Activated CD4-positive, alpha-beta T cell treated with anti-CD3 and anti-CD28 coated beads for 36 hours (primary cell): ENCODE measurements at regions of chr17 and their contacts with region 1.

Region 1: GRCh38 chr17:47789611-47790561 is 31.7 kb downstream of the OSBPL7 start:
- DNase-seq: peak; percentile 80
- ATAC-seq: peak; percentile 97
- H3K4me3 Mint-ChIP-seq: peak overlapping the region; percentile 63
- H3K27ac Mint-ChIP-seq: no peak overlapping the region
- H3K4me1 Mint-ChIP-seq: peaks cover 10% of the 10 kb centered on the region
- H3K27me3 Mint-ChIP-seq: peaks cover 47% of the 10 kb centered on the region

Region 2: GRCh38 chr17:47733047-47733673 is 56.7 kb before region 1 on chr17 and contains the start of gene TBX21:
- CTCF ChIA-PET with region 1: interaction called, 10 read pairs
- POLR2A ChIA-PET with region 1: no interaction called
- intact Hi-C with region 1: no loop called
- DNase-seq: peak; percentile 96
- ATAC-seq: peak; percentile 80
- H3K4me3 Mint-ChIP-seq: peak within 1 kb of the TSS; percentile 93
- H3K27ac Mint-ChIP-seq: peak within 1 kb of the TSS; percentile 98
- H3K4me1 Mint-ChIP-seq: peaks cover 63% of the 10 kb centered on the region
- H3K27me3 Mint-ChIP-seq: no peaks in the 10 kb centered on the region
- total RNA-seq, gene TBX21: 73.4 to 76.8 TPM

Region 3: GRCh38 chr17:47742319-47743181 is 47.3 kb before region 1 on chr17:
- CTCF ChIA-PET with region 1: interaction called, 3 read pairs
- POLR2A ChIA-PET with region 1: no interaction called
- intact Hi-C with region 1: loop called in 1 of 2 experiments (anchors 5 kb)
- DNase-seq: peak; percentile 67
- ATAC-seq: no peak
- H3K4me3 Mint-ChIP-seq: no peak overlapping the region
- H3K27ac Mint-ChIP-seq: peak overlapping the region; percentile 13
- H3K4me1 Mint-ChIP-seq: peaks cover 44% of the 10 kb centered on the region
- H3K27me3 Mint-ChIP-seq: no peaks in the 10 kb centered on the region

Region 4: GRCh38 chr17:47757386-47757785 is 32.5 kb before region 1 on chr17:
- CTCF ChIA-PET with region 1: no interaction called
- POLR2A ChIA-PET with region 1: no interaction called
- intact Hi-C with region 1: loop called in 1 of 2 experiments (anchors 5 kb)
- DNase-seq: no peak
- ATAC-seq: no peak
- H3K4me3 Mint-ChIP-seq: no peak overlapping the region
- H3K27ac Mint-ChIP-seq: no peak overlapping the region
- H3K4me1 Mint-ChIP-seq: no peaks in the 10 kb centered on the region
- H3K27me3 Mint-ChIP-seq: peaks cover 8% of the 10 kb centered on the region

Region 5: GRCh38 chr17:47776330-47777197 is 13.3 kb before region 1 on chr17:
- CTCF ChIA-PET with region 1: interaction called, 7 read pairs
- POLR2A ChIA-PET with region 1: no interaction called
- intact Hi-C with region 1: loop called in 1 of 2 experiments (anchors 1 kb)
- DNase-seq: peak; percentile 54
- ATAC-seq: peak; percentile 94
- H3K4me3 Mint-ChIP-seq: no peak overlapping the region
- H3K27ac Mint-ChIP-seq: no peak overlapping the region
- H3K4me1 Mint-ChIP-seq: no peaks in the 10 kb centered on the region
- H3K27me3 Mint-ChIP-seq: peaks cover 33% of the 10 kb centered on the region